ENCODE measurements at regions of chr16 and their contacts with region 1.

Region 1: DNA sequence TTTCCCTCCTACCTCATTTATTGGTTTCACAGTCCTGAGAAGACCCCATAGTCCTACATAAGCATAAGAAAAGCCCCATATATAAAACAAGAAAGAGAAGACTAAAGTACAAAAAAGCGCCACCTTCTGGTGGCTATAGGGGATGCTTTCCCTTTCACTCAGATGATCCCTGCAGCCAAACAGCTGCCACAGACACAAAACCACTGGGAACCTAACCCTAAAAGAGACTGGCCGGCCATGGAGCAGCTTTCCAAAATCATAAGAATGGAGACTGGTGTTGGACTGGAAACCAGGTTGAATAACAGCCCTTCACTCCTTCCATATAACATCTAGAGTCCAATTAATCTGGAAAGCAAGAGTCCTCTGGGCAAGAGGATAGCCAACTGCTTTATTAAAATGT is 11.4 kb downstream of the DYNC1LI2 start:
- DNase-seq: peak; percentile 56
- ATAC-seq: peak; percentile 73
- H3K4me3 Mint-ChIP-seq: no peak overlapping the region
- H3K27ac Mint-ChIP-seq: peak overlapping the region; percentile 9
- H3K4me1 Mint-ChIP-seq: peaks cover 27% of the 10 kb centered on the region
- H3K27me3 Mint-ChIP-seq: no peaks in the 10 kb centered on the region

Region 2: GRCh38 chr16:66696669-66697630 is 43.1 kb before region 1 on chr16 and contains the start of gene CMTM4:
- CTCF ChIA-PET with region 1: no interaction called
- POLR2A ChIA-PET with region 1: no interaction called
- DNase-seq: peak; percentile 72
- ATAC-seq: peak; percentile 94
- H3K4me3 Mint-ChIP-seq: peak within 1 kb of the TSS; percentile 75
- H3K27ac Mint-ChIP-seq: peak within 1 kb of the TSS; percentile 20
- H3K4me1 Mint-ChIP-seq: peaks cover 23% of the 10 kb centered on the region
- H3K27me3 Mint-ChIP-seq: peaks cover 41% of the 10 kb centered on the region
- total RNA-seq, gene CMTM4: 1.2 TPM

Region 3: DNA sequence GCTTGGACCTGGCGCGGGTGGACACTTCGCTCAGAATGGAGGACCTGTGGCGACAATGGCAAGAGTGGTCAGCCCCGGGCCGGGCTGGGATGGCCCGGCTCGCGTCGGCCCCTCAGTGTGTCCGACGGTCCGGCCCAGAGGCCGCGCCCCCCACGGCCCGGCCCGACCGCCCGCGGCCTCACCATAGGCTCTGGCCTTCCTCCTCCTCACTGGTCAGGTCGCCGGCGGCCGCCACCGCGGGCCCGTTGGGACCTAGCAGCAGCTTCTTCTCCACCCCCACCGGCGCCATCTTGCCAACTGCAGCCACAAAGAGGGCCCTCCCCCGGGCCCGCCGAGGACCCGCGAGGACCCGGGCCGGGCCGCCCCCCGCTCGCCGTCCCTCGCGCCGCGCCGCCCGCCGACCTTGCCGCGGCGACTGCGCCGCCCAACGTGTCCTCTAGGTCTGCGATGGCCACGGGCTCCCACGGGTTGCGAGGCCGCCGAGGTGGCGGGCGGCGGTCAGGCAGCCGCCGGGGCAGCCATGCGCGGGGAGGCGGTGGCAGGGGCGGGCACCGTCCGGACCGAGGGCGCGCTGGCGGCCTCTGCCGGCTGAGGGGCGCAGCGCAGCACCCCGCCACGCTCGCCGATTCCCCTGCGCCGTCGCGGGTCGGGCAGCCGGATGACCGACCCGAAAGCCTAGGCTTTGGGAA is 11.4 kb after region 1 on chr16 and contains the start of gene DYNC1LI2:
- CTCF ChIA-PET with region 1: interaction called, 38 read pairs
- POLR2A ChIA-PET with region 1: interaction called, 8 read pairs
- DNase-seq: peak; percentile 84
- ATAC-seq: peak; percentile 84
- H3K4me3 Mint-ChIP-seq: peak within 1 kb of the TSS; percentile 80
- H3K27ac Mint-ChIP-seq: peak within 1 kb of the TSS; percentile 90
- H3K4me1 Mint-ChIP-seq: peaks cover 44% of the 10 kb centered on the region
- H3K27me3 Mint-ChIP-seq: peaks cover 17% of the 10 kb centered on the region
- total RNA-seq, gene DYNC1LI2: 56.5 to 63.1 TPM